Caco-2 (cell line): ENCODE measurements at regions of chr7 and their contacts with region 1.

Region 1: GRCh38 chr7:116953727-116954442 is 584 bp downstream of the ST7 start:
- DNase-seq: peak; percentile 81 to 87
- H3K4me3 ChIP-seq: peak overlapping the region; percentile 91
- H3K4me3 Mint-ChIP-seq: peak overlapping the region; percentile 94
- H3K27ac Mint-ChIP-seq: peak overlapping the region; percentile 94
- H3K4me1 ChIP-seq: peaks cover 12% of the 10 kb centered on the region
- H3K4me1 Mint-ChIP-seq: peaks cover 18% of the 10 kb centered on the region
- H3K27me3 ChIP-seq: no peaks in the 10 kb centered on the region
- H3K27me3 Mint-ChIP-seq: no peaks in the 10 kb centered on the region
- CTCF ChIP-seq: no peak

Region 2: DNA sequence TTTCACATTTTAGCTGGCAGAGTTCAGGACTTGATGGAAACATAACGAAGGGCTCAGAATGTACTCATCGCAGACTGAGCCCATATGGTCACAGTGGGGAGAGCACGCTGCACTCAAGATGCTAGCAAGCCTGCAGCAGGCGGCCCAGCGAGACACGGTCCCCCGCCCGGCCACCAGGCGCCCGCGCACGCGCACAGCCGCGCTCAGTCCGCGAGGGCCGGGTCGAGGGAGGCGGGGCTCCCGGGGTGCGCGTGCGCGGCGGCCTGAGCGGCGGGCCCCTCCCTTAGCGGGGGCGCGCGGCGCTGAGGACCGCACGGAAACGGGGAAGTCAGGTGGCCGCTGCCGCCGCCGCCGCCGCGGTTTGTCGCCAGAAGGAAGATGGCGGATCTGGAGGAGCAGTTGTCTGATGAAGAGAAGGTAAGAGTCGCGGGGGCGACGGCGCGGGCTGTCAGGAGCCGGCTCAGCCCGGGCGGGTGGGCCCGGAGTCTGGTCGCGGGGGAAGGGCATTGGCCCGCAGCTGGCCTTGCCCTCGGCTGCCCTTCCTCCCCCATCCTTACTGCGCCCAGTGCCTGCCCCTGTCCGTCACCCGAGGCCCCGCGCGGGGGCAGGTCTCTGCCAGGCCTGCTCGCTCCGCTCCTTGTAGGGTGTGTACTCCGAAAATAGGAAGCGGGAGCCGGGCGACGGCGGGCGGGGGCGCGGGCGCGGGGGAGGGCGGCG is 91.5 kb before region 1 on chr7 and contains the start of gene CAPZA2:
- CTCF ChIA-PET with region 1: interaction called, 3 read pairs
- POLR2A ChIA-PET with region 1: no interaction called
- intact Hi-C with region 1: loop called (anchors 1 kb)
- DNase-seq: peak; percentile 91 to 97
- H3K4me3 ChIP-seq: peak within 1 kb of the TSS; percentile 99
- H3K4me3 Mint-ChIP-seq: peak within 1 kb of the TSS; percentile 95
- H3K27ac Mint-ChIP-seq: peak within 1 kb of the TSS; percentile 93
- H3K4me1 ChIP-seq: peaks cover 16% of the 10 kb centered on the region
- H3K4me1 Mint-ChIP-seq: peaks cover 12% of the 10 kb centered on the region
- H3K27me3 ChIP-seq: no peaks in the 10 kb centered on the region
- H3K27me3 Mint-ChIP-seq: no peaks in the 10 kb centered on the region
- CTCF ChIP-seq: peak; percentile 8 to 29
- total RNA-seq, gene CAPZA2: 271 and 281 TPM in 2 replicates

Region 3: GRCh38 chr7:116942504-116942903 is 11.4 kb before region 1 on chr7:
- CTCF ChIA-PET with region 1: no interaction called
- POLR2A ChIA-PET with region 1: no interaction called
- intact Hi-C with region 1: no loop called
- DNase-seq: no peak
- H3K4me3 ChIP-seq: no peak overlapping the region
- H3K4me3 Mint-ChIP-seq: no peak overlapping the region
- H3K27ac Mint-ChIP-seq: no peak overlapping the region
- H3K4me1 ChIP-seq: no peaks in the 10 kb centered on the region
- H3K4me1 Mint-ChIP-seq: no peaks in the 10 kb centered on the region
- H3K27me3 ChIP-seq: no peaks in the 10 kb centered on the region
- H3K27me3 Mint-ChIP-seq: no peaks in the 10 kb centered on the region
- CTCF ChIP-seq: no peak

Region 4: GRCh38 chr7:117014673-117015133 is 60.8 kb after region 1 on chr7:
- CTCF ChIA-PET with region 1: no interaction called
- POLR2A ChIA-PET with region 1: no interaction called
- intact Hi-C with region 1: loop called (anchors 5 kb)
- DNase-seq: no peak
- H3K4me3 ChIP-seq: no peak overlapping the region
- H3K4me3 Mint-ChIP-seq: no peak overlapping the region
- H3K27ac Mint-ChIP-seq: no peak overlapping the region
- H3K4me1 ChIP-seq: no peaks in the 10 kb centered on the region; the same call in 1 of the 2 replicates
- H3K4me1 Mint-ChIP-seq: peaks cover 14% of the 10 kb centered on the region
- H3K27me3 ChIP-seq: no peaks in the 10 kb centered on the region
- H3K27me3 Mint-ChIP-seq: no peaks in the 10 kb centered on the region
- CTCF ChIP-seq: no peak